Naive thymus-derived CD4-positive, alpha-beta T cell (primary cell): ENCODE measurements at regions of chr5 and their contacts with region 1.

Region 1: GRCh38 chr5:151094054-151094851 is 13.4 kb upstream of the TNIP1 start:
- DNase-seq: peak in 2 of 9 donors; percentile 31 to 73
- ATAC-seq: peak; percentile 74
- H3K4me3 ChIP-seq: no peak overlapping the region
- H3K4me3 Mint-ChIP-seq: peak overlapping the region; percentile 7 to 73 (median 47)
- H3K27ac ChIP-seq: peak overlapping the region; percentile 26
- H3K27ac Mint-ChIP-seq: peak overlapping the region; percentile 38 to 90 (median 84)
- H3K4me1 ChIP-seq: peaks cover 31 to 53% of the 10 kb centered on the region in 2 donors
- H3K4me1 Mint-ChIP-seq: peaks cover 51 to 86% (median 69%) of the 10 kb centered on the region in 7 donors
- H3K27me3 ChIP-seq: no peaks in the 10 kb centered on the region
- H3K27me3 Mint-ChIP-seq: no peaks in the 10 kb centered on the region

Region 2: GRCh38 chr5:151080623-151081430 is 13.4 kb before region 1 on chr5 and contains the start of gene TNIP1:
- CTCF ChIA-PET with region 1: no interaction called
- POLR2A ChIA-PET with region 1: interaction called, 5 read pairs
- intact Hi-C with region 1: loop called (anchors 1 kb)
- DNase-seq: peak; percentile 86 to 99 (median 90)
- ATAC-seq: peak; percentile 94
- H3K4me3 ChIP-seq: peak within 1 kb of the TSS; percentile 86
- H3K4me3 Mint-ChIP-seq: peak within 1 kb of the TSS; percentile 85 to 95 (median 90)
- H3K27ac ChIP-seq: peak within 1 kb of the TSS; percentile 96
- H3K27ac Mint-ChIP-seq: peak within 1 kb of the TSS; percentile 86 to 95 (median 91)
- H3K4me1 ChIP-seq: peaks cover 37 to 69% of the 10 kb centered on the region in 2 donors
- H3K4me1 Mint-ChIP-seq: peaks cover 53 to 84% (median 73%) of the 10 kb centered on the region in 7 donors
- H3K27me3 ChIP-seq: no peaks in the 10 kb centered on the region
- H3K27me3 Mint-ChIP-seq: no peaks in the 10 kb centered on the region
- total RNA-seq, gene TNIP1: 124 to 234 (median 131) TPM